Activated CD4-positive, alpha-beta memory T cell treated with anti-CD3 and anti-CD28 coated beads for 36 hours (primary cell): ENCODE measurements at regions of chr12 and their contacts with region 1.

Region 1: DNA sequence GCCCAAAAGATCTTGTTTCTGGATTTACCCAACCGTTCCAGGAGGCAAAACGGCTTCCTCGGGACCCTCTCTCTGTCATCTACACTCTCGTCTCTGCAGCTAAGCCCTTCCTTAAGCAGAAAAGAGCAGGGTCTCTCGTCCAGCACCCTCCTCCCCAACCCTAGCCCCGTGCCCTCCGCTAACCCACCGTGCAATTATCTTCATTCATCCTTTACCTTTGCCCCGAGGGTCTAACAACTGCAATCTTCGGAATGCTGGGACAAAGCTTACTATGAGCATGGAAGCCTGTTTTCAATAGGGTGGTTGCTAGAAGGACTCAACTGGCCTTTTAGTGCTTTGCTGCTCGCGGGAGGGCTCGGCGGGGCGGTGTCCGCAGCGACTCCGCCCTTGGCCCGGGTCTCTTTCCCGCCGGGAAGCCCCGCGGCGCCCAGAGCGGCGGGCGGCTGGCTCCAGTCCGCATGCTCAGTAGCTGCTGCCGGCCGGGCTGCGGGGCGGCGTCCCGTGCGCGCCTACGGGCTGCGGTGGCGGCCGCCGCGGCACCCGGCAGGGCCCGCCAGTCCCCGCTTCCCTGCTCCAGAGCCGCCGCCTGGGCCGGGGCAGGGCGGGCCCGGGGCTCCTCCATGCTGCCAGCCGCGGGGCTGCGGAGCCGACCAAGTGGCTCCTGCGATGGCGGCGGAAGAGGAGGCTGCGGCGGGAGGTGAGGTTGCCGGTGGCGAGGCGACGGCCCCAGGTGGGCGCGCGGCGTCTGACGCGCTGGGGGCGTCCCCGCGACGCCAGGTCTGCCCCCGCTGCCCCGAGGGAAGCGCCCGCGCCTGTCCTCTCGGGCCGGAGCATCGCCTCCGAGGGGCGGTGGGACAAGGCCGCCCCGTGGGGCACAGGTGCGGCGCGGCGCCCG is at the start of gene BMAL2:
- DNase-seq: peak; percentile 54
- H3K4me3 Mint-ChIP-seq: peak within 1 kb of the TSS; percentile 91
- H3K27ac Mint-ChIP-seq: peak within 1 kb of the TSS; percentile 84
- H3K4me1 Mint-ChIP-seq: peaks cover 49% of the 10 kb centered on the region
- H3K27me3 Mint-ChIP-seq: peaks cover 31% of the 10 kb centered on the region
- total RNA-seq, gene BMAL2: 14.9 to 15.2 TPM

Region 2: GRCh38 chr12:26748741-26749431 is 583.8 kb before region 1 on chr12:
- CTCF ChIA-PET with region 1: no interaction called
- POLR2A ChIA-PET with region 1: no interaction called
- intact Hi-C with region 1: loop called (anchors 2 kb)
- DNase-seq: no peak
- H3K4me3 Mint-ChIP-seq: peak overlapping the region; percentile 16
- H3K27ac Mint-ChIP-seq: peak overlapping the region; percentile 69
- H3K4me1 Mint-ChIP-seq: peaks cover 55% of the 10 kb centered on the region
- H3K27me3 Mint-ChIP-seq: no peaks in the 10 kb centered on the region

Region 3: DNA sequence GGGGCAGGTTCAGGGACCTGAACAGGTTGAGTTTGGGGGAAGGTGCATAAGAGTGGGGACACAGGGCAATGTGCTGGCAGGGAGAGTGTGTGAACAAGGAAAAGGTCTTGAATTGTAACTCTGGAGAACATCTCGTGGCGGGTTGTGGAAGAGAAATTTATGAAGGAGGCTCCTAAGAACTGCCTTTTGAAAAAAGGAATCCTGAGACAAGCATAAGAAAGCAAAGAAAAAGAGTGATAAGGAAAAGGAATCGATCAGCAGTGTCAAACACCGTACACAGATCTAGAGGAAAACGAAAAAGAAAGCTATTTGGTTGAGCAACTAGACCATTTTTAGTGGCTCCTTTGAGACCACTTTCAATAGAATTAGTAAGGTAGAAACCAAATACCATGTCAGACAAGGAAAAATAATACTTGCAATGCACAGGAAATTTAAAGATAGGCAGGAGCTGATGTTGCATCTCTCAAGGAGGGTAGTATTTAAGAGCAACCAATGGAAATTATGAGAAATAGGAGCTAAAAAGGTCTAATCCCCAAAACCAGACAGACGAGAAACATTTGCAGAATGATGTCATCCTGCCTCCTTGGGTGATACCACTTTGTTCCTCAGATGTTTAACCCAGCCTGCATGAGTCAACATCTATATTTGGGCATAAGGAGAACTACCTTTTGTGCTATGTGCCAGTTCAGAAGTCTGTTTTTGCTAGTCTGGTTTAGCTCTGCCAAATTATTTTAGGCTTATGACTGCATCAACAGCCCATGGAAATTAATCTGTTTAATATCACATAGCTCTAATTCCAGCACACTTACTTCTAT is 153.0 kb before region 1 on chr12:
- CTCF ChIA-PET with region 1: interaction called, 3 read pairs
- POLR2A ChIA-PET with region 1: no interaction called
- intact Hi-C with region 1: loop called (anchors 1 kb)
- DNase-seq: peak; percentile 47
- H3K4me3 Mint-ChIP-seq: peak overlapping the region; percentile 40
- H3K27ac Mint-ChIP-seq: peak overlapping the region; percentile 71
- H3K4me1 Mint-ChIP-seq: peaks cover 42% of the 10 kb centered on the region
- H3K27me3 Mint-ChIP-seq: no peaks in the 10 kb centered on the region

Region 4: GRCh38 chr12:27243804-27244683 is 88.6 kb before region 1 on chr12 and contains the start of gene STK38L:
- CTCF ChIA-PET with region 1: no interaction called
- POLR2A ChIA-PET with region 1: interaction called, 8 read pairs
- intact Hi-C with region 1: loop called (anchors 2 kb)
- DNase-seq: peak; percentile 98
- H3K4me3 Mint-ChIP-seq: peak within 1 kb of the TSS; percentile 100
- H3K27ac Mint-ChIP-seq: peak within 1 kb of the TSS; percentile 91
- H3K4me1 Mint-ChIP-seq: peaks cover 45% of the 10 kb centered on the region
- H3K27me3 Mint-ChIP-seq: no peaks in the 10 kb centered on the region
- total RNA-seq, gene STK38L: 25.1 to 25.2 TPM

Region 5: GRCh38 chr12:27383429-27384260 is 51.0 kb after region 1 on chr12:
- CTCF ChIA-PET with region 1: interaction called, 7 read pairs
- POLR2A ChIA-PET with region 1: no interaction called
- intact Hi-C with region 1: loop called (anchors 1 kb)
- DNase-seq: peak; percentile 78
- H3K4me3 Mint-ChIP-seq: no peak overlapping the region
- H3K27ac Mint-ChIP-seq: no peak overlapping the region
- H3K4me1 Mint-ChIP-seq: no peaks in the 10 kb centered on the region
- H3K27me3 Mint-ChIP-seq: no peaks in the 10 kb centered on the region

Region 6: DNA sequence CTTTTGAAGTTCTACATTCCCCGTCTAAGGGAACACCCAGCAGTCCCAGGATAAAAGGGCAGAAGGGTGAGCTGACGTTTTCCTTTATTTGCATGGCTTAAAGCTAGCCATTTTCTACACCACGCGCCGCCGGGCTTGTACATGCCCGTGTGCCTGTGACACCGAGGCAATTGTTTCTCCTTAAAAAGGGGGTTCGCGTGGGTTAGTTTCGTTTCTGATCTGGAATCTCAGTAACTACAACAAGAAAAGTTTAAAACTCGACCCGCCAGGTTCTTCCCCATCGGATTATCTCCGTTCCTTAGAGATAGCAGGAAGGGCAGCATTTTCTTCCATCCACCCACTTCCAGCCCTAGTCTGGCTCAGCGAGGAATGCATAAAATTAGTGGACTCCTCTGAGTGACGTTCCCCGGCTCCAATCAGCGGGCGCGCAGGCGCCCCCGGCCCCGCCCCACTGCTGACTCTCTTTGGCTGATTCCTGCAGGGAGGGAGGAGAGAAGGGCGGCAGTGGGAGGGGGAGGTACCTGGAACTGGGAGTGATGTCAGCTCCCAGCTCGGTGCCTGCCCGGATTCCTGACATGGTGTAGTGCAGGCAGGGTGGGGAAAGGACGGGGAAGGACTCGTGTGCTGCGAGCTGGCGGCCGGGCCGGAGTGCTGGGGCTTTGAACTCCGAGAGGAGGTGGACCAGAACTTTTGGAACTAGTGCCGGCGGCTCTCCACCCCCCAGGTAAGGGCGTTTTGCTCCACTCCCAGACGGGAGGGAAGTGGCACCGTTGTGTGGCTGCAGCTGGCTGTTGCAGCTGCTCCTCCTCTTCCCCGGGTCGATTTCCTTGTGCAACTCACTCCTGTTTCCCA is 191.2 kb after region 1 on chr12 and contains the start of gene PPFIBP1:
- CTCF ChIA-PET with region 1: no interaction called
- POLR2A ChIA-PET with region 1: no interaction called
- intact Hi-C with region 1: loop called (anchors 2 kb)
- DNase-seq: peak; percentile 99
- H3K4me3 Mint-ChIP-seq: peak within 1 kb of the TSS; percentile 93
- H3K27ac Mint-ChIP-seq: peak within 1 kb of the TSS; percentile 79
- H3K4me1 Mint-ChIP-seq: peaks cover 18% of the 10 kb centered on the region
- H3K27me3 Mint-ChIP-seq: peaks cover 8% of the 10 kb centered on the region
- total RNA-seq, gene PPFIBP1: 14.1 to 14.9 TPM

Region 7: DNA sequence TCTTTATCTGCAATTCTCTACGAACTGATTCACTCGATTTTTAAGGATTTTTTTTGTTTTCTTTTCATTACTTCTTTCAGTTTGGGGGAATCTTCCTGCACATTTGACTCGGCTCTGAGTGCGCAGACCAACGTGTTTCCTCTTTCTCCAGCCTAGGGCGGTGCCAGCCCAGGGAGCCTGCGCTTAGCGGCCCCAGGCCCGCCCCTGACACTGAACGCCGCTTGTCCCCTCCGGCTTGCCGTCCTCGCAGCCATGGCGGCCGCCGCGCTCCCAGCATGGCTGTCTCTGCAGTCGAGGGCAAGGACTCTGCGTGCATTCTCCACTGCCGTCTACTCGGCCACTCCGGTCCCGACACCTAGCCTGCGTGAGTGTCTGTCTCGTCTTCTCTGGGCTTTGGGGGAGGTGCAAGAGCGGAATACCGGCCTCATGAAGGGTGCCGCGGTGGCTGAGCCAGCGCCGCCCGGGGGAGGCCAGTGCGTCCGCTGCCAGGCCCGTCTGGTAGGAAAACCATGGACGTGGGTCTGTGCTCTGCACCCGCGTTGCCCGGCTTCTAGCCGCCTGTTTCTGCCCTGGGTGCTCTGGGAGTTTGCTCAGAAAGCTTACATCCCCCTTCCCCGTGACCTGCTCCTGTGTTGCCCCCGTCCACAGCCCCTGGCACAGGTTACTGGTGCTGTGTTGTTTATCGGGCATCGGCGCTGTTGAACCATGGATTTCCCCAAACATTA is 378.1 kb after region 1 on chr12 and contains the start of gene MRPS35:
- CTCF ChIA-PET with region 1: no interaction called
- POLR2A ChIA-PET with region 1: no interaction called
- intact Hi-C with region 1: loop called (anchors 1 kb)
- DNase-seq: peak; percentile 95
- H3K4me3 Mint-ChIP-seq: peak within 1 kb of the TSS; percentile 93
- H3K27ac Mint-ChIP-seq: peak within 1 kb of the TSS; percentile 90
- H3K4me1 Mint-ChIP-seq: peaks cover 17% of the 10 kb centered on the region
- H3K27me3 Mint-ChIP-seq: peaks cover 3% of the 10 kb centered on the region
- total RNA-seq, gene MRPS35: 49.2 to 50.2 TPM